AG04449 (cell line): ENCODE measurements at regions of chr3 and their contacts with region 1.

Region 1: GRCh38 chr3:78633626-78634025 is 1134.2 kb downstream of the ROBO1 start:
- DNase-seq: peak; percentile 24
- H3K4me3 ChIP-seq: no peak overlapping the region
- CTCF ChIP-seq: no peak

Region 2: DNA sequence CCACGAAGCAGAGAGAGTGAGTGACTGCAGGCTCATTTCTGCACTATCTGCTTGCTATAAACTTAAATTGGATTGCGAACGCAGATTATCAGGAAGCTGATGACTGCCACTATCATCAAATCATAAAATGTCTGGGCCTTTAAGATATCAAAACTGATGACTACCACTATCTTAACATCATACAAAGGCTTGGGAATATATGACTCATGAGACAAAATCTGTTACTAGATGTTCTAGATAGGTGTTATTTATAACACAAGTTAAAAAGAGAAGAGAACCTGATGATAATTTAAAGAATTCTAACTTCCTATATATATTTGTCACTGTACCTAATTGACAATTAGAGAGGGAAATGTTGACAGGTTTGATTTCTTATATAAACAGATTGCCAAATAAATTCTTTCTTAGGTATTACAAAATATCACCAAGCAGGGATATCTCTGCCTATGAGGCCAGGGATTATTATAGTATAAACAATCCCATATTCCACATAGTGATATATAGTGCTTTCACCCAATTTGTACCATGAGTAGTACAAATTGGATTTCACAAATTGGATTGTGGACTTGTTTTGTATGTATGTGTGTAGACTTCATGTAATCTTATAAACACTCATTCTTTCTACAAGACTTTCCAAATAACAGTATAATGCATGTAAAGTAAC is 23.0 kb before region 1 on chr3:
- CTCF ChIA-PET with region 1: no interaction called
- POLR2A ChIA-PET with region 1: no interaction called
- DNase-seq: no peak
- H3K4me3 ChIP-seq: no peak overlapping the region
- CTCF ChIP-seq: no peak

Region 3: GRCh38 chr3:78645628-78646310 is 12.1 kb after region 1 on chr3:
- CTCF ChIA-PET with region 1: interaction called, 17 read pairs
- POLR2A ChIA-PET with region 1: no interaction called
- DNase-seq: peak; percentile 33
- H3K4me3 ChIP-seq: no peak overlapping the region
- CTCF ChIP-seq: peak; percentile 59